ENCODE measurements at regions of chr11 and their contacts with region 1.

Region 1: GRCh38 chr11:113974741-113975470 is at the start of gene HTR3A:
- DNase-seq: no peak
- ATAC-seq: no peak
- H3K4me3 Mint-ChIP-seq: peak within 1 kb of the TSS; percentile 42
- H3K27ac Mint-ChIP-seq: peak within 1 kb of the TSS; percentile 50
- H3K4me1 Mint-ChIP-seq: peaks cover 64% of the 10 kb centered on the region
- H3K27me3 Mint-ChIP-seq: no peaks in the 10 kb centered on the region
- CTCF ChIP-seq: no peak
- total RNA-seq, gene HTR3A: 15.3 and 15.6 TPM in 2 replicates

Region 2: DNA sequence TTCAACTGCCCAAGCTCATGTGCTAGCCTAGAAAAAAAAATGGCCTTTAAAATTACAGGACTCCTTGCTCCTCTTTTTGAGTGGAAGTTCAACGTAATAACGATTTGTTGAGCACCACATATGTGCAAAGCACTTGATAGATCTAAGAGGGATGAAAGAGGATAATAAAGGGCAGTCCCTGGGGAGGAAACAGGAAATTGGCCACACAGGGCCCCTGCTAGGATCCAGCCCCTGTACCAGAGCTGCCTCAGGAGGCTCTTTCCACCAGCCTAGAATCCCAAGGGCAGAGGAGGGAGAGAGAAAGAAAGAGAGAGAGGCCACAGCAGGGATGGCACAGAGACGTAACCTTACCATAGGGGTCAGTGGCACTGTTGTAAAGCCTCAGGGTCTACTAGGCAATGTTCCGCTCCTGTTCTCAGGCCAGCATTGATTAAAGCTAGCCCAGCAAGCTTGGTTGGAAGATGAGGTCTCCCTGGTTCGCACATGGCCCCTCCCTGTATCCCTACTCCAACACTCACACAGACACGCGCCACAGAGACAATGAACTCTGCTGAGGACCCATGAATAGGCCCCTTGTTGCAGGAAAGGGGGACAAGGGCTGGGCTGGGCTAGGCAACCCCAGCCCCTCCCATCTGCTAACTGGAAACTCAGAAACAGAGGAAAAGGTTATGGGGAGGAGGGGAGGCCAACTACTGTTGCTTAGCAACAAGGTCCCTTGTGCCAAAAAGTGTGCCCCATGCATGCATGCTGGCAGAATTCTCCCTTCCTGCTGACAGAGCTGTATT is 268.8 kb before region 1 on chr11 and contains the start of gene TMPRSS5:
- CTCF ChIA-PET with region 1: no interaction called
- POLR2A ChIA-PET with region 1: no interaction called
- intact Hi-C with region 1: no loop called
- DNase-seq: no peak
- ATAC-seq: no peak
- H3K4me3 Mint-ChIP-seq: no peak within 1 kb of the TSS
- H3K27ac Mint-ChIP-seq: no peak within 1 kb of the TSS
- H3K4me1 Mint-ChIP-seq: peaks cover 2% of the 10 kb centered on the region
- H3K27me3 Mint-ChIP-seq: no peaks in the 10 kb centered on the region
- CTCF ChIP-seq: no peak
- total RNA-seq, gene TMPRSS5: 1.3 and 3.1 TPM in 2 replicates

Region 3: GRCh38 chr11:113896156-113896879 is 78.6 kb before region 1 on chr11:
- CTCF ChIA-PET with region 1: interaction called, 56 read pairs
- POLR2A ChIA-PET with region 1: interaction called, 21 read pairs
- intact Hi-C with region 1: loop called (anchors 1 kb)
- DNase-seq: no peak
- ATAC-seq: peak; percentile 73
- H3K4me3 Mint-ChIP-seq: no peak overlapping the region
- H3K27ac Mint-ChIP-seq: peak overlapping the region; percentile 37
- H3K4me1 Mint-ChIP-seq: peaks cover 21% of the 10 kb centered on the region
- H3K27me3 Mint-ChIP-seq: no peaks in the 10 kb centered on the region
- CTCF ChIP-seq: peak; percentile 67

Region 4: GRCh38 chr11:113994077-113994954 is 19.4 kb after region 1 on chr11:
- CTCF ChIA-PET with region 1: interaction called, 66 read pairs
- POLR2A ChIA-PET with region 1: interaction called, 17 read pairs
- intact Hi-C with region 1: loop called (anchors 1 kb)
- DNase-seq: no peak
- ATAC-seq: peak; percentile 74
- H3K4me3 Mint-ChIP-seq: no peak overlapping the region
- H3K27ac Mint-ChIP-seq: no peak overlapping the region
- H3K4me1 Mint-ChIP-seq: peaks cover 12% of the 10 kb centered on the region
- H3K27me3 Mint-ChIP-seq: peaks cover 4% of the 10 kb centered on the region
- CTCF ChIP-seq: no peak

Region 5: DNA sequence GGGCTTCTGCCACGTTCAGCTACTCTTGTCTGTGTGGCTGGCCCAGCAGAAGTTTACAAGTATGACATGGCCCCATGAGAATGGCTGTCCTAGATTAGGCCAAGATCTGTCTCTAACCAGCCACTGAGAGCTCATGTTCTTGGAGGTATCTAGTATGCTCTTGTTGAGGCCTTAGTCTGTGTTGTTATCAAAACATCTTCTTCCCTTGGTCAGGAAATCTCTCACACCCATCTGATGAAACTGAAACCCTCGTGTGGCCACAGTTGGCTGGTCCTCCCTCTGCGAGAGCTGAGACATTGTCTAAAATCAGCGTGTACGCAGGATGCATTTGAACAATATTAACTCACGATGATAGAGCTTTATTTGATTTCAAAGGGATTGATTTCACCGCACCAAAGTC is 212.3 kb after region 1 on chr11:
- CTCF ChIA-PET with region 1: no interaction called
- POLR2A ChIA-PET with region 1: interaction called, 8 read pairs
- intact Hi-C with region 1: loop called (anchors 1 kb)
- DNase-seq: no peak
- ATAC-seq: peak; percentile 82
- H3K4me3 Mint-ChIP-seq: peak overlapping the region; percentile 55
- H3K27ac Mint-ChIP-seq: peak overlapping the region; percentile 94
- H3K4me1 Mint-ChIP-seq: peaks cover 69% of the 10 kb centered on the region
- H3K27me3 Mint-ChIP-seq: no peaks in the 10 kb centered on the region
- CTCF ChIP-seq: no peak

Region 6: DNA sequence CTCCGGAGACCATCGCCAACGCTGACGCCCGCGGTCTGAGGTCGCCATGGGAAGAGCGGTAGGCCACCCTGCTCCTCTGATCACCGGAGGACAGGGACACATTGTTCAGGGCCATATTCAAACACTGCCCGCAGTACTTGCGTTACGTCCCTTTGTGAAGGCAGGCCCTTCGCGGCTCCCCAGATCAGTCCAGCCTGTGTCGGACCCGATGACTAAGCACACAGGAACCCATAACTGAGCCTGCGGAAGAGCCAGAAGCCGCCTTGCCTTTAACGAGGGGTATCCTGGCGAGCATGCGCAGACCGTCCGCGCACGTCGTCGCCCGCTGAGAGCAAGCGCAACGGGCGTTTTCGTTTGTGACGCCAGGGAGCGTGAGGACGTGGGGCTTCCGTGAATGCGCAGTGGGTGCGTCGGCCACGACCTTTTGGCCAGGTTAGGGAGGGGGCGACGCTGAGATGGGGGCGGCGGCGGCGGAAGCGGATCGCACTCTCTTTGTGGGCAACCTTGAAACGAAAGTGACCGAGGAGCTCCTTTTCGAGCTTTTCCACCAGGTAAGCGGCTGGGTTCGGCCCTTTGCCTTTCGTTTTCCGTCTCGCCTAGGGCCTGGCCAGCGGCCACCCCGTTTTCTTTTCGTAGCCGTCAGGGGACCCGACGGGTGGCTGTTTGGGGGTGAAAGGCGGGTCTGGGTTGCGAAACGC is 425.5 kb after region 1 on chr11 and contains the starts of genes C11orf71 and RBM7:
- CTCF ChIA-PET with region 1: no interaction called
- POLR2A ChIA-PET with region 1: interaction called, 9 read pairs
- intact Hi-C with region 1: loop called (anchors 1 kb)
- DNase-seq: peak; percentile 93
- ATAC-seq: peak; percentile 93
- H3K4me3 Mint-ChIP-seq: peak within 1 kb of the TSS; percentile 96
- H3K27ac Mint-ChIP-seq: peak within 1 kb of the TSS; percentile 98
- H3K4me1 Mint-ChIP-seq: peaks cover 50% of the 10 kb centered on the region
- H3K27me3 Mint-ChIP-seq: no peaks in the 10 kb centered on the region
- CTCF ChIP-seq: no peak
- total RNA-seq, gene C11orf71: 9.5 and 11.1 TPM in 2 replicates
- total RNA-seq, gene RBM7: 33.6 and 34.1 TPM in 2 replicates